Psoas muscle (tissue), 8 donors: ENCODE measurements at regions of chr15 and their contacts with region 1.

Region 1: DNA sequence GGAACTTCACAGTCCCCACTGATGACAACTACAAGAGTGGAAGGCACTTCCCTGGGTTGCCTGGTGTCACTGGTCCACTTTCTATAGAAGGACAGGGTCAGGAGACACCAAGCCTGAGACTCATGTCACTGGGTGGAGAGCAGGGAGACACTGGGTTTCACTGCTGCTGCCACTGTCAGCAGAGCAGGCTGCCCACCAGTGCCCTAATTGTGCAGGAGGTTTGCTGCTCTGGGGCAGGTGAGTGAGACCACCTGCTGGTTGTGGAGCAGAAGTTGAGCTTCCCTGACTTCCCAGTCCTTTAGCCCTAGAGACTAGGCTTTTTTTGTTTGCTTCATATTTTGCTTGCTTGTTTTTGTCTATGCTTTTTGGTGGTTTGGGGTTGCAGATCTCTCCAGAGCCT is 528.4 kb upstream of the RGMA start:
- DNase-seq: peak; percentile 14 to 57
- ATAC-seq: peak; percentile 65 to 92 (median 86)
- H3K4me3 ChIP-seq: no peak overlapping the region
- H3K27ac ChIP-seq: no peak overlapping the region
- H3K4me1 ChIP-seq: no peaks in the 10 kb centered on the region
- H3K27me3 ChIP-seq: no peaks in the 10 kb centered on the region
- CTCF ChIP-seq: peak; percentile 49

Region 2: GRCh38 chr15:93035953-93036800 is 581.3 kb before region 1 on chr15:
- intact Hi-C with region 1: loop called (anchors 2 to 10 kb)
- DNase-seq: peak; percentile 35 to 71
- ATAC-seq: peak; percentile 57 to 75 (median 64)
- H3K4me3 ChIP-seq: no peak overlapping the region
- H3K27ac ChIP-seq: no peak overlapping the region
- H3K4me1 ChIP-seq: peaks cover 16% of the 10 kb centered on the region
- H3K27me3 ChIP-seq: no peaks in the 10 kb centered on the region
- CTCF ChIP-seq: peak; percentile 56

Region 3: DNA sequence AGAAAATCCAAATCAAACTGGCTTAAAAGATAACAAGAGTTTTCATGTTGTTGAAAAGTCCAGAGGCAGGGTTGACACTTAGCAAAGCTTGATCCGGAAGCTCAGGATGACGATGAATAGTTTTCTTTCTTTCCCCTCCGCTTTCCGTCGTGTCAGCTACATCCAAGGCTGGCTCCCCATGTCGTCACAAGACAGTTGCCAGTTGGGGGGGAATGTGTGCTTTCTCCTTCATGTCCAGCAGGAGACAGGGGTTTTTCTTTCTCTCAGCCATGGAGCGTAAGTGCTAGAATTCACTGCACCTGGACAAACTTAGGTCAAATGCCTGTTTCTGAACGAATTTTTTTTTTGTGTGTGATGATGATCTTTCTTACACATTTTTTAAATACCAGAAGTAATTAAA is 254.6 kb before region 1 on chr15:
- intact Hi-C with region 1: no loop called
- DNase-seq: no peak
- ATAC-seq: no peak
- H3K4me3 ChIP-seq: no peak overlapping the region
- H3K27ac ChIP-seq: no peak overlapping the region
- H3K4me1 ChIP-seq: no peaks in the 10 kb centered on the region
- H3K27me3 ChIP-seq: no peaks in the 10 kb centered on the region
- CTCF ChIP-seq: no peak

Region 4: DNA sequence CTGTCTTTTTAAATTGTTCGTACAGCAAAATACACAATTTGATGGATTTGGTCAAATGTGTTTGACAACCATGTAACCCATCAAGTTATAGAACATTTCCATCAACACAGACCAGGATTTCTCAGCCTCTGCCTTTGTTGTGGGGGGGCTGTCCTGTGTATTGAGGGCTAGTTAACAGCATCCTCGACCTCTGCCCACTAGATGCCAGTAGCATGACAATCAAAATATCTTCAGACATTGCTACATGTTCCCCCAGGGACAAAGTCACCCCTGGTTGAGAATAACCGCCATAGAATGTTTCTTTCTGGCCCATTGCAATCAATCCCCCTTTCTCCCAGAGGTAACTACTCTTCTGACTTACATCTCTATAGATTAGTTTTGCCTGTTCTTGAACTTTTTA is 218.3 kb before region 1 on chr15:
- intact Hi-C with region 1: loop called in 1 of 2 experiments (anchors 5 kb)
- DNase-seq: no peak
- ATAC-seq: peak in 3 of 4 donors; percentile 63 to 85 (median 83)
- H3K4me3 ChIP-seq: no peak overlapping the region
- H3K27ac ChIP-seq: no peak overlapping the region
- H3K4me1 ChIP-seq: no peaks in the 10 kb centered on the region
- H3K27me3 ChIP-seq: no peaks in the 10 kb centered on the region
- CTCF ChIP-seq: peak; percentile 14

Region 5: GRCh38 chr15:93505506-93505905 is 111.9 kb before region 1 on chr15:
- intact Hi-C with region 1: no loop called
- DNase-seq: peak in 1 of 2 donors; percentile 60
- ATAC-seq: peak; percentile 71 to 88 (median 81)
- H3K4me3 ChIP-seq: no peak overlapping the region
- H3K27ac ChIP-seq: no peak overlapping the region
- H3K4me1 ChIP-seq: no peaks in the 10 kb centered on the region
- H3K27me3 ChIP-seq: no peaks in the 10 kb centered on the region
- CTCF ChIP-seq: no peak

Region 6: DNA sequence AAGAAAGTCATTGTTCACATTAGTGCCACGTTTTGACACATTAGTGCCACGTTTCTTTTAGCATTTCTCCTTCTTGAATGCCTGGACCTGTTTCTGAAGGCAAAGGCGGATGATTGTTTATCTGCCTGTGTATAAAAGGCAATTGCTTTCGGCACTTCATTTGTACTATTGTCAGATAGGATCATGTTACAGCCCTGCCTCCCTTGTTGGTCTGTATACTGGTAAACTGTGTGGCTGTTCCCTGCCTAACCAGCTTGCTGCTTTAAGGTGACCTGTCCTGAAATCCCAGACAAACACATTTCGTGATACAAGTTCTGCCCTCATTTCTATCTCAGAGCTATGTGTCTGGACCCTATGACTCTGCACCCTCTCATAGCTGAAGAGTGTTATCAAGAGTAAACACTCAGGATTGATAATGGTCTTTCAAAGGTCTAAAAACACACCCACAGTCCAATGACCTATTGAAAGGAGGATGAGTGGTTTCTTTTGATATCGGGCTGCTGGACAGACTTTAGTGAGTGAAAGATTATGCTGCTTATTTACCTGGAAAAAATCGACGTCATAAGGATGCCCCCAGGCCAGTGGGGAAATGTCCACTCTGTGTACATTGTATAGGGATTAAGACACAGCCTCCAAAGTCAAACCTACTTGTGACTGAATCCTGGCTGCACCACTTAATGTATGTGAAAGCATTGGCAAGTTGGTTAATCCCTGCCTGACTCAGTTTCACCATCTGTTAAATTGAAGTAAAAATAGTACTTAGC is 337.7 kb after region 1 on chr15:
- intact Hi-C with region 1: no loop called
- DNase-seq: no peak
- ATAC-seq: no peak
- H3K4me3 ChIP-seq: no peak overlapping the region
- H3K27ac ChIP-seq: no peak overlapping the region
- H3K4me1 ChIP-seq: no peaks in the 10 kb centered on the region
- H3K27me3 ChIP-seq: no peaks in the 10 kb centered on the region
- CTCF ChIP-seq: no peak